ENCODE measurements at regions of chr1 and their contacts with region 1.

Region 1: GRCh38 chr1:167447521-167448136 is 70.7 kb downstream of the CD247 start:
- DNase-seq: peak; percentile 93
- H3K4me3 Mint-ChIP-seq: peak overlapping the region; percentile 53
- H3K27ac Mint-ChIP-seq: peak overlapping the region; percentile 91
- H3K4me1 Mint-ChIP-seq: peaks cover 76% of the 10 kb centered on the region
- H3K27me3 Mint-ChIP-seq: no peaks in the 10 kb centered on the region

Region 2: GRCh38 chr1:167105271-167106118 is 342.1 kb before region 1 on chr1:
- CTCF ChIA-PET with region 1: no interaction called
- intact Hi-C with region 1: loop called (anchors 5 kb)
- DNase-seq: no peak
- H3K4me3 Mint-ChIP-seq: no peak overlapping the region
- H3K27ac Mint-ChIP-seq: peak overlapping the region; percentile 42
- H3K4me1 Mint-ChIP-seq: peaks cover 56% of the 10 kb centered on the region
- H3K27me3 Mint-ChIP-seq: no peaks in the 10 kb centered on the region

Region 3: GRCh38 chr1:167491586-167492461 is 44.2 kb after region 1 on chr1:
- CTCF ChIA-PET with region 1: interaction called, 6 read pairs
- intact Hi-C with region 1: loop called (anchors 1 kb)
- DNase-seq: peak; percentile 60
- H3K4me3 Mint-ChIP-seq: peak overlapping the region; percentile 69
- H3K27ac Mint-ChIP-seq: peak overlapping the region; percentile 92
- H3K4me1 Mint-ChIP-seq: peaks cover 94% of the 10 kb centered on the region
- H3K27me3 Mint-ChIP-seq: no peaks in the 10 kb centered on the region

Region 4: DNA sequence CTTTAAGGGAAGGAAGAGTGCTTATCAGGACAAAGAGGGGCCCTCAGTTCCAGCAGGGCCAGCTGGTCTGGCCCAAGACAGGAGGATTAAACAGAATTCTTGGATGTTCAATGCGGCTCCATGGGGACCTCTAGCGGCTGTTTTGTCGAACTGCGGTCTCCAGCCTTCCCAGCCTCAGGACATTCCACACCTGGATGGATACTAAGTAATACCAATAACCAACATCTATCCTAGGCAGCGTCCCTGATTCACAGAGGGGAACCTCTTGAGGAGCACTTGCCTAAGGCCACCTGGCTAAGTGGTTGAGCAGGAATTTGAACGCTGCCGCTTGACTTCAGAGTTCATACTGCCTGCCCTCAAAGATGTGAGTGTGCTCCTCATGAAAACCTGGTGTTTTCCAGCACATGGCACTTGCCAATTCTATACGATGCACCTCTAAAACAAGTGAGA is 86.2 kb after region 1 on chr1:
- CTCF ChIA-PET with region 1: interaction called, 61 read pairs
- intact Hi-C with region 1: loop called (anchors 1 kb)
- DNase-seq: peak; percentile 78
- H3K4me3 Mint-ChIP-seq: no peak overlapping the region
- H3K27ac Mint-ChIP-seq: no peak overlapping the region
- H3K4me1 Mint-ChIP-seq: peaks cover 4% of the 10 kb centered on the region
- H3K27me3 Mint-ChIP-seq: peaks cover 2% of the 10 kb centered on the region

Region 5: GRCh38 chr1:167803358-167804207 is 356.0 kb after region 1 on chr1:
- CTCF ChIA-PET with region 1: no interaction called
- intact Hi-C with region 1: loop called (anchors 1 kb)
- DNase-seq: peak; percentile 98
- H3K4me3 Mint-ChIP-seq: peak overlapping the region; percentile 50
- H3K27ac Mint-ChIP-seq: peak overlapping the region; percentile 80
- H3K4me1 Mint-ChIP-seq: peaks cover 24% of the 10 kb centered on the region
- H3K27me3 Mint-ChIP-seq: no peaks in the 10 kb centered on the region

Measured in activated naive CD4-positive, alpha-beta T cell treated with anti-CD3 and anti-CD28 coated beads for 36 hours (primary cell).